CD4-positive, alpha-beta T cell (primary cell): ENCODE measurements at regions of chr4 and their contacts with region 1.

Region 1: GRCh38 chr4:159102622-159103383 is at the start of gene RAPGEF2:
- DNase-seq: peak; percentile 72 to 95 (median 84)
- ATAC-seq: peak; percentile 86
- H3K4me3 ChIP-seq: peak within 1 kb of the TSS; percentile 97
- H3K4me3 Mint-ChIP-seq: peak within 1 kb of the TSS; percentile 92
- H3K27ac ChIP-seq: peak within 1 kb of the TSS in 1 of 2 donors; percentile 52
- H3K27ac Mint-ChIP-seq: peak within 1 kb of the TSS; percentile 88
- H3K4me1 ChIP-seq: peaks cover 26% of the 10 kb centered on the region
- H3K4me1 Mint-ChIP-seq: peaks cover 48% of the 10 kb centered on the region
- H3K27me3 ChIP-seq: no peaks in the 10 kb centered on the region
- H3K27me3 Mint-ChIP-seq: no peaks in the 10 kb centered on the region
- CTCF ChIP-seq: no peak
- total RNA-seq, gene RAPGEF2: 25.6 to 26.4 TPM

Region 2: DNA sequence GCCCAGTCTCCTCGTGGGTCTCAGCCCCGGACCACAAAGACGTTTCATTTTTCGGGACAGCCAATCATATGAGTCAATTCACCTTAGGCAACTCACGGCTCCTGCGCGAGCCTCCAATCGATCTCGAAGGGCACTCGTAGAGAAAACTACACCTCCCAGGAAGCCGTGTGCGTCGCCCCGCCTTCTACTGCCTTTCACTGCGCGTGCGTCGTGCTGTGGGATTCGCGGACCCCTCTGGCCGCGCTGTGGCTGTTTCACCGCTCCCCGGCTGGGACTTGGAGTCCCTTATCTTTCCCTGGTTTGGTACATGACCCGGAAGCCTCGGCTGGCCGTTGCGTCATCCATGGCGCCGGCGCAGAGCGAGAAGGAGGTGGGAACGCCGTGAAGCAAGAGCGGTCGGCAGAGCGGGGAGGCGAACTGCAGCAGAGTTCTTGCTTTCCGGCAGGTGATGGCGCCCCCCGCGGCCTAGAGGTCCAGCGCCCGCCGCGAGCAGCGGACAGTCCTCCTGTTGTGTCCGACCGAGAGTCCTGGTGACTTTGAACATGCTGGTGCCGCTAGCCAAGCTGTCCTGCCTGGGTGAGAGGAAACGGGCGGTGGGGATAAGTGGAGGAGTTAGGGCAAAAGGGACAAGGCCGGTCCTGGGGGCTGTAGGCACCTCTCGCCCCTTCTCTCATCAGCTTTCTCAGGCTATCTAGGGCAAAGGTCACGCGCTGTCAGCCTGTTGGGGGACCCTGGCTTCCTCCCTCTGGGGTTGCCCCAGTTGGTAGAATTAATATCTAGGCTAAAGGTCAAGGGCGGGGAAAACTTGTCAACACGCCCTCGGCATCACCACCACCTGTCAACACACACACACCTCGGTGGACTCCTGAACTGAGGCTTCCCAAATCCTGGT is 430.6 kb before region 1 on chr4 and contains the start of gene ETFDH:
- CTCF ChIA-PET with region 1: no interaction called
- POLR2A ChIA-PET with region 1: no interaction called
- intact Hi-C with region 1: loop called (anchors 5 kb)
- DNase-seq: peak; percentile 96 to 100 (median 98)
- ATAC-seq: peak; percentile 83
- H3K4me3 ChIP-seq: peak within 1 kb of the TSS; percentile 98
- H3K4me3 Mint-ChIP-seq: peak within 1 kb of the TSS; percentile 93
- H3K27ac ChIP-seq: peak within 1 kb of the TSS; percentile 91 to 99
- H3K27ac Mint-ChIP-seq: peak within 1 kb of the TSS; percentile 85
- H3K4me1 ChIP-seq: peaks cover 19% of the 10 kb centered on the region
- H3K4me1 Mint-ChIP-seq: peaks cover 25% of the 10 kb centered on the region
- H3K27me3 ChIP-seq: no peaks in the 10 kb centered on the region
- H3K27me3 Mint-ChIP-seq: no peaks in the 10 kb centered on the region
- CTCF ChIP-seq: peak; percentile 62
- total RNA-seq, gene ETFDH: 12.7 to 13.1 TPM

Region 3: DNA sequence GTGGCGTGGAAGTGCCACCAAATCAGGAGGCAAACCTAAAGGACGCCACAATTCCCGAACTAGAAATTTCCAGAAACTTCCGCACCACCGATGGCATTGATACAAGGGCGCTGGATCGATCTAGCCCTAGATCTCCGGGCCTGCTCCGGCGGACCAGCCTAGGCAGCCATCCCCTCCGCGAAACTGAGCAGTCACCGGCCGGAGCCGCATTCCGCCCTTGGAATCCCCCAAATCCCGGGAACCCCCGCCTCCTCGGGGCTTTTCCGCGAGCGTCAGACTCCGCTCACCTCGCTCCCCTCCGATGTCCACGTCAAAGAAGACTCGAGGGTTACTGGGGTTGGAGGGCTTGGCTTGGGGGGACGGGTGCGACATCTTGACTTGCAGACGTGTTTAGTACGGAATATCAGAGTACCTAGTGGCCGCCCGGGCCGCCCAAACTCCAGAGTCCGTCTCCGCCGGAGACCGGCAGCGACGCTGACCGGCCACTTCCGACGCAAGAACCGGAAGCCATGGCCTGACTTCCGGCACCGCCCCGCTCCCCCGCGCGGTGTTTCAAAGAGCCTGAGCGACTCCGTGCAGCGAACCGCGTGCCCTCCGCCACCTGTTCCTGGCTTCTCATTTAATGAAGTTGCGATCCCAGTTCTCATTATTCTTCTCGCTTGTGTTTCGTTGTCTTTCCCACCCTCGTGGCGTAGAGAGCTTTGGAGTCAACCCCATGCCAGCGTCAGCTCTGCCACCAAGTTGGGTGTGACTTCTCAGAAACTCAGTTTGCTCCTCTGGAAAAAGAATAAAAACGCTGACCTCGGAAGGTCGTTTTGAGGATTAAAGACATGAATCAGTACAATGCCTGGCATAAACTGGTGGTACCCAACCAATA is 379.6 kb before region 1 on chr4 and contains the start of gene PPID:
- CTCF ChIA-PET with region 1: no interaction called
- POLR2A ChIA-PET with region 1: no interaction called
- intact Hi-C with region 1: loop called in 1 of 2 experiments (anchors 5 kb)
- DNase-seq: peak; percentile 56 to 92 (median 70)
- ATAC-seq: peak; percentile 84
- H3K4me3 ChIP-seq: peak within 1 kb of the TSS; percentile 97
- H3K4me3 Mint-ChIP-seq: peak within 1 kb of the TSS; percentile 96
- H3K27ac ChIP-seq: peak within 1 kb of the TSS; percentile 85 to 94
- H3K27ac Mint-ChIP-seq: peak within 1 kb of the TSS; percentile 94
- H3K4me1 ChIP-seq: peaks cover 17% of the 10 kb centered on the region
- H3K4me1 Mint-ChIP-seq: peaks cover 38% of the 10 kb centered on the region
- H3K27me3 ChIP-seq: no peaks in the 10 kb centered on the region
- H3K27me3 Mint-ChIP-seq: no peaks in the 10 kb centered on the region
- CTCF ChIP-seq: no peak
- total RNA-seq, gene PPID: 10.7 to 10.8 TPM

Region 4: DNA sequence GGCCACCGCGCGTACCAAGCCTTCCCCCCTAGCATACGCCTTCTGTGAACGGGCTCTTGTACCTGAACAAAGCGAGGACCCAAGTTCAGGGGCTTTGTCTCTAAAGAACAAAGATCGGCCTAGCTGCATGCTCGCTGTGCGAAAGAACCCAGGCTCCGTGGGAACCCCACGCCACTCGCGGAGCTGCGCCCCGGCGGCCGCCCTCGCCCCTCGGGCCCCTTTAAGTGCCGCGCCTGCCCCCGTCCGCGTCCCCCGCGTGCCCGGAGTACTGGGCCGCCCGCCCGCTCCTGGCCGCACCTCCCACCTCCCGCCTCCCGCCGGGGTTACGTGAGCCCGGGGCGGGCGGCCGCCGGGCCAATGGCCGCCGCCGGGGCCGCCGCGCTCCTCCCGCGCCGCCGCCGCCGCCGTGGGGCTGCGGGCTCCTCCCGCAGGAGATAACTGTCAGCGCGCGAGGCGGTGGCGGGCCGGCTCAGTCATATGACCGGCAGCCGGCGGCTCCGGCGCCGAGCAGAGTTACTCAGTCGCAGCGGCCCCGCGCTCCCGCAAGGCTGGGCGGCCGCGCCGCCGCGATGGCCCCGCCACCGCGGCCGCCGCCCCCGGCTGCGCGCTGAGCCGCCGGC is 334.1 kb before region 1 on chr4 and contains the start of gene FNIP2:
- CTCF ChIA-PET with region 1: no interaction called
- POLR2A ChIA-PET with region 1: no interaction called
- intact Hi-C with region 1: loop called in 1 of 2 experiments (anchors 5 kb)
- DNase-seq: peak; percentile 39 to 90 (median 66)
- ATAC-seq: peak; percentile 78
- H3K4me3 ChIP-seq: peak within 1 kb of the TSS; percentile 69
- H3K4me3 Mint-ChIP-seq: peak within 1 kb of the TSS; percentile 98
- H3K27ac ChIP-seq: peak within 1 kb of the TSS; percentile 32 to 62
- H3K27ac Mint-ChIP-seq: peak within 1 kb of the TSS; percentile 91
- H3K4me1 ChIP-seq: peaks cover 10% of the 10 kb centered on the region
- H3K4me1 Mint-ChIP-seq: peaks cover 42% of the 10 kb centered on the region
- H3K27me3 ChIP-seq: no peaks in the 10 kb centered on the region
- H3K27me3 Mint-ChIP-seq: no peaks in the 10 kb centered on the region
- CTCF ChIP-seq: no peak
- total RNA-seq, gene FNIP2: 7.5 to 7.7 TPM

Region 5: DNA sequence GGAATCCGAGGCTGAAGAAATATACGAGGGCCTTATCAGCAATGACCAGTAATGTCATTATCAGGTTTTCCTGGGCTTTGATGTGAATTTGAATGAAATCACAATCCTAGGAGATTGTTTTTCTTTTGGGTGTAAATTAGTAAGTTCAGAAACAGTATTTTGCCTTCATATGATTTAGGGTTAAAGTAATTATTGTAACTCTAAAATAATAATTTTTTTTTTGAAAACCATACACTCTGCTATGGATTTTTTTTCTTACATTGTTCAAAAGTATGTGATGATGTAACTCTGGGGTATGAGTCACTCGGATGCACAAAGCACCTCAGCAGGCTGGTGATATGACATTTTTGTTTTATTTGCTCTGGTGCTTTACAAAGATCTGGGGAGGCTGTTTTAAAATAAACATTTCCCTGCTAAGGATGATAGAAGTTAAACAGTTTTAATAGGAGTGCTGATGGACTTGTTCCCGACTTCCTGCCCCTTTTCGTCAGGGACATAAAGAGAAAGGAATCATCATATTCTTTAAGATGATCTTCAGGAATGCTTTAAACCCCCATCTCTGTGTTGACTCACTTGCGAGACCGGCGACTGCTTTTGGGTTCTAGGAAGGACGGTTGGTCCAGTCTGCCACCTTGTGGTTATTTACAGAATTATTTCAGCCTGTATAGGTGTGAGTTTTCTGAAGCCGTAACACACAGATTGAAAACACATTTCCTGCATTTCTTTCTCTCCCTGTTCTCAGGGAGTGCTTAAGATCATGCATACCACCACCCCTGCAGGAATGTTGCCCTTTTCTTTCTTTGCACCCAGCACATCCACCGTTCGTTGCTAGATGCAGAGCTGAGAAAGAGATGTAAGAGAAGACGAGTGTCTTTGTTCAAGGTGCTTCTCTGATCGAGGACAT is 72.5 kb after region 1 on chr4:
- CTCF ChIA-PET with region 1: no interaction called
- POLR2A ChIA-PET with region 1: no interaction called
- intact Hi-C with region 1: loop called (anchors 5 to 10 kb)
- DNase-seq: peak; percentile 27 to 83 (median 38)
- ATAC-seq: peak; percentile 94
- H3K4me3 ChIP-seq: no peak overlapping the region
- H3K4me3 Mint-ChIP-seq: no peak overlapping the region
- H3K27ac ChIP-seq: no peak overlapping the region
- H3K27ac Mint-ChIP-seq: no peak overlapping the region
- H3K4me1 ChIP-seq: peaks cover 6% of the 10 kb centered on the region
- H3K4me1 Mint-ChIP-seq: peaks cover 49% of the 10 kb centered on the region
- H3K27me3 ChIP-seq: no peaks in the 10 kb centered on the region
- H3K27me3 Mint-ChIP-seq: no peaks in the 10 kb centered on the region
- CTCF ChIP-seq: peak; percentile 87